ENCODE measurements at regions of chr1 and their contacts with region 1.

Region 1: GRCh38 chr1:43238085-43238484 is 31.7 kb upstream of the TMEM125 start:
- DNase-seq: peak; percentile 57 to 93 (median 76)
- H3K4me3 ChIP-seq: no peak overlapping the region
- H3K27ac ChIP-seq: peak overlapping the region in 56 of 59 donors; percentile 11 to 87 (median 70)
- H3K27me3 ChIP-seq: no peaks in the 10 kb centered on the region
- CTCF ChIP-seq: peak; percentile 52 to 94 (median 81)

Region 2: GRCh38 chr1:43101061-43101460 is 137.0 kb before region 1 on chr1:
- intact Hi-C with region 1: no loop called
- DNase-seq: no peak
- H3K4me3 ChIP-seq: no peak overlapping the region
- H3K27ac ChIP-seq: no peak overlapping the region
- H3K27me3 ChIP-seq: no peaks in the 10 kb centered on the region
- CTCF ChIP-seq: no peak

Region 3: GRCh38 chr1:43282220-43283195 is 44.4 kb after region 1 on chr1:
- intact Hi-C with region 1: loop called in 1 of 2 experiments (anchors 5 kb)
- DNase-seq: peak in 5 of 10 donors; percentile 1 to 56 (median 37)
- H3K4me3 ChIP-seq: no peak overlapping the region
- H3K27ac ChIP-seq: peak overlapping the region in 55 of 59 donors; percentile 7 to 92 (median 74)
- H3K27me3 ChIP-seq: no peaks in the 10 kb centered on the region
- CTCF ChIP-seq: no peak

Region 4: GRCh38 chr1:43292679-43293078 is 54.6 kb after region 1 on chr1:
- intact Hi-C with region 1: no loop called
- DNase-seq: no peak
- H3K4me3 ChIP-seq: no peak overlapping the region
- H3K27ac ChIP-seq: peak overlapping the region in 57 of 59 donors; percentile 22 to 100 (median 97)
- H3K27me3 ChIP-seq: no peaks in the 10 kb centered on the region
- CTCF ChIP-seq: no peak